ENCODE measurements at regions of chr3 and their contacts with region 1.

Region 1: GRCh38 chr3:4826237-4827100 is 152.8 kb upstream of the BHLHE40 start:
- H3K4me3 Mint-ChIP-seq: no peak overlapping the region
- H3K27ac Mint-ChIP-seq: peak overlapping the region; percentile 56
- H3K4me1 Mint-ChIP-seq: peaks cover 70% of the 10 kb centered on the region
- H3K27me3 Mint-ChIP-seq: no peaks in the 10 kb centered on the region

Region 2: DNA sequence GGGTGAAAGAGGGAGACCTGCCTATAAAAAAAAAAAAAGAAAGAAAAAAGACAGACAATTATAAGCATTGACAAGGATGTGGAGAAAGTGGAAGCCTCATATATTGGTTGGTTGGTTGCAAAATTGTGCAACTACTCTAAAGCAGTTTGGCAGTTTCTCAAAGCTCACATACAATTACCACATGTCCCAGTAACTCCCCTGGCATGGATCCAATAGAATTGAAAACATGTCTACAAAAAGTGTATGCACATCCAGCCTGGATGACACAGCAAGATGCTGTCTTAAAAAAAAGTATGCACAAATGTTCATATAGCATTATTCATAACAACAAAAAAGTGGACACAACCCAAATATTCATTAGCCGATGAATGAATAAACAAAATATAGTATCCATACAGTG is 503.8 kb before region 1 on chr3:
- intact Hi-C with region 1: no loop called
- H3K4me3 Mint-ChIP-seq: no peak overlapping the region
- H3K27ac Mint-ChIP-seq: no peak overlapping the region
- H3K4me1 Mint-ChIP-seq: peaks cover 40% of the 10 kb centered on the region
- H3K27me3 Mint-ChIP-seq: no peaks in the 10 kb centered on the region

Region 3: DNA sequence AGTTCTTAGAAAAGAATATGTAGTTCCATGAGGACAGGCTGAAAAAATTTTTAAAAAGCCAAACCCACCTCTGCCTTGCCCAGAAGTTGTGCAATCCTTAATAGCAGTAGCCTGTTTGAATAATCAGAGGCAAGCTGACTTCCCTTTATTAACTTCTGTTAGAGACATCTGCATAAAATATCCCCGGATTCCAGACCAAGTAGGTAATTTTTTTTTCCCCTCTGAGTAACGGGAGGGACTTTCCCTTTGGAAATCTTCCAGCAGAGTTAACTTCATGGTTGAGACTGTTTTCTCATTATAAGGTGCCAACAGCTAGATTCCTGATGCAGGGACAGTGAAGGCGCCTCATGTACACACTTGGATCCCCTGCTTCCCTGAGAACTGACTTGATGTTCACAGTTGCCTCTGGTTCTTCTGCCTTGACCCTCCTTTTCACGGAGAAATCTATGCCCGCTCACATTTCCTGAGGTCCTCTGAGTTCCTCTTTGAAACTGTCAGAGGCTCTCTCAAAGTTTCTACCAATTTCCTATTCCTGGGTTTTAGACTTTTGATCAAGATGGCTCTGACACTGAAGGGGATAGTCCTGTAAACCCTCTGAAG is 74.9 kb before region 1 on chr3:
- intact Hi-C with region 1: loop called (anchors 5 kb)
- H3K4me3 Mint-ChIP-seq: peak overlapping the region; percentile 58
- H3K27ac Mint-ChIP-seq: peak overlapping the region; percentile 89
- H3K4me1 Mint-ChIP-seq: peaks cover 88% of the 10 kb centered on the region
- H3K27me3 Mint-ChIP-seq: no peaks in the 10 kb centered on the region